Heart right ventricle (tissue), 16 donors: ENCODE measurements at regions of chr13 and their contacts with region 1.

Region 1: DNA sequence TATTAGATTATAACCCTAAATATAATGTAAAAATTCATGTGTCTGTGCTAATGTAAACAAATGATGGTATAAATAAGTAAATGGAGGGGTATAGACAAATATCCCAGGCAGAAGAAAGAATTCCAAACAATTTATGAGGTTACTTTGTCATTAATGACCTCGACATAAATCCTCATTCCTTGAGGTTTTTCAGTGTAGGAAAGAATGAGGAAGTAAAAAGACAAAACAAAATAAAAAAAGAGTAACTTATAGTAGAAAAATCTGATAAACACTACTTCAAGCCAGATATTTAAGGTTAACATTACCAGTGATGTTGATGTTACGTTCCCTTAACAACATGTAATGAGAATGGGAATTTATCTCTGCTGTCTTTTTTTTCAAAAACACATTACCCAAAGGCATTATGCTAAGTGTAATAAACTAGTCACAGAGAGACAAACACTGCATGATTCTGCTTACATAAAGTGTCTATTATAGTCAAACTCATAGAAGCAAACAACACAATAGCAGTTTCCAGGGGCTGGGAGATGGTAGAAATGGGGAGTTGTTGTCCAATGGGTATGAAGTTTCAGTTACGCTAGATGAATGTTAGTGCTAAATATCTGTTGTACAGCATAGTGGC is 935.1 kb downstream of the SLITRK1 start:
- DNase-seq: no peak
- ATAC-seq: no peak
- H3K4me3 ChIP-seq: no peak overlapping the region
- H3K27ac ChIP-seq: no peak overlapping the region
- H3K4me1 ChIP-seq: no peaks in the 10 kb centered on the region
- H3K27me3 ChIP-seq: no peaks in the 10 kb centered on the region
- CTCF ChIP-seq: no peak

Region 2: DNA sequence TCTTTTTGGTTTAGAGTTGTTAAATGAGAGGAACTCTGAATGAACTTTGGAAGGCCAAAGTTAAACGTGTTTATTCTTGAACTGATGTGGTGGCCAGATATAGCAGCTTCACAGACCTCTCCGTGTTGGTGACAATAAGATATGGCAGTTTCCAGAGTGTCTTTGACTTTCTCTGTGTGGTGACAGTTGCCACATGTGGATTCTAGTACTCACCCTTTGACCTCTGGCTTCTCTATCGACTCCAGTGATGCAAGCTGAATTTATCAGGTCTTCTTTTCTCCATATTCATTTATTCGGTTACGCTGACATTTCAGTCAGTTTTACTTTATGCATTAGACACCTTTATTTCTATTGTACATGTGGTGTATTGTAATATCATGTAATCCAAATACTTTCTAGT is 534.5 kb before region 1 on chr13:
- intact Hi-C with region 1: loop called in 1 of 10 experiments (anchors 5 kb)
- DNase-seq: no peak
- ATAC-seq: no peak
- H3K4me3 ChIP-seq: no peak overlapping the region
- H3K27ac ChIP-seq: no peak overlapping the region
- H3K4me1 ChIP-seq: no peaks in the 10 kb centered on the region
- H3K27me3 ChIP-seq: no peaks in the 10 kb centered on the region
- CTCF ChIP-seq: no peak

Region 3: DNA sequence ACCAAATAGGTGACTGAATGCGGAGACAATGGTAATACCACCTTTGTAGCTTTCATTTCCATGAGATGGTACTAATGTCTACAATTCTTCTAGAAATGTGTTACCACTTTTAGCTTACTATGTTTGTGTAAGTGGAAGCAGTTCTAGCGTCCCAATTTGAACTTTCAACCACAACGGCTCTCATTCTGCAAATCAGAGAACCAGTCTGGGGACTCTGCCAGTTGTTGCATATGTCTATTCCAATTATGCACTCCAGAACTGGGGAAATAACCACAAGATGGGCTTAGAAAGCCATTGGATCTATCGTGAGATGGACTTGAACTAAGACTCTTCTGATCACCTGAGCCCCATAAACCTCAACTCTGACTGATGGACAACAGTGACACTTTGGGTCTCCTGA is 72.8 kb after region 1 on chr13:
- intact Hi-C with region 1: no loop called
- DNase-seq: no peak
- ATAC-seq: no peak
- H3K4me3 ChIP-seq: no peak overlapping the region
- H3K27ac ChIP-seq: no peak overlapping the region
- H3K4me1 ChIP-seq: no peaks in the 10 kb centered on the region
- H3K27me3 ChIP-seq: no peaks in the 10 kb centered on the region
- CTCF ChIP-seq: no peak